ENCODE measurements at regions of chr14 and their contacts with region 1.

Region 1: GRCh38 chr14:55270832-55271565 is at the start of gene FBXO34:
- DNase-seq: peak; percentile 63
- H3K4me3 ChIP-seq: peak within 1 kb of the TSS; percentile 90
- H3K27me3 ChIP-seq: no peaks in the 10 kb centered on the region; the same call in 1 of the 2 replicates
- CTCF ChIP-seq: peak; percentile 100
- polyA plus RNA-seq, gene FBXO34: 15.0 and 16.9 TPM in 2 replicates

Region 2: GRCh38 chr14:54773171-54773975 is 497.6 kb before region 1 on chr14:
- CTCF ChIA-PET with region 1: no interaction called
- POLR2A ChIA-PET with region 1: no interaction called
- DNase-seq: peak; percentile 98
- H3K4me3 ChIP-seq: no peak overlapping the region
- H3K27me3 ChIP-seq: no peaks in the 10 kb centered on the region
- CTCF ChIP-seq: peak; percentile 69

Region 3: DNA sequence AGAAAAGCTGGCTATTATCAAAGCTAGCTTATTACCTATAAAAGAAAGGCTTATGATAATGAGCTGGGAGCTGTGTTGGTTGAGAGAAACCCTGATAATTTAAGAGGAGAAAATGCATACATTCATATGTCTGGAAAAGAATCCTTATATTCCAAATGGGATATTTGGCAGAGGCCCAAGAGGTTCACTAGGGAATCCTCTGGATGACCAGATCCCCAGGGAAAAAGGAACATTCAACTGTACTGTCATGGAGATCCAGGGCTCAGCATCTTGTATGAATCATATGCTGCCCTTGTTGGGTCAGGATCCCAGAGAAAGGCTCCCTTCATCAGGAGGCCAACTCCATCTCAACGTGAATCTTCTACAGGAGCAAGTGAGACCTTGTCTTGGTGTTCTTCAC is 16.4 kb before region 1 on chr14:
- CTCF ChIA-PET with region 1: interaction called, 12 read pairs
- POLR2A ChIA-PET with region 1: no interaction called
- DNase-seq: no peak
- H3K4me3 ChIP-seq: no peak overlapping the region
- H3K27me3 ChIP-seq: peaks cover 11% of the 10 kb centered on the region
- CTCF ChIP-seq: no peak

Region 4: GRCh38 chr14:55348766-55349453 is 77.9 kb after region 1 on chr14:
- CTCF ChIA-PET with region 1: interaction called, 29 read pairs
- POLR2A ChIA-PET with region 1: no interaction called
- DNase-seq: no peak
- H3K4me3 ChIP-seq: no peak overlapping the region
- H3K27me3 ChIP-seq: no peaks in the 10 kb centered on the region
- CTCF ChIP-seq: no peak

Measured in BJ (cell line).